Left cardiac atrium (tissue), 4 donors: ENCODE measurements at regions of chr4 and their contacts with region 1.

Region 1: GRCh38 chr4:148441986-148442831 is at the start of gene NR3C2:
- DNase-seq: peak; percentile 99
- ATAC-seq: peak; percentile 91 to 94
- total RNA-seq, gene NR3C2: 18.4 to 23.8 TPM

Region 2: DNA sequence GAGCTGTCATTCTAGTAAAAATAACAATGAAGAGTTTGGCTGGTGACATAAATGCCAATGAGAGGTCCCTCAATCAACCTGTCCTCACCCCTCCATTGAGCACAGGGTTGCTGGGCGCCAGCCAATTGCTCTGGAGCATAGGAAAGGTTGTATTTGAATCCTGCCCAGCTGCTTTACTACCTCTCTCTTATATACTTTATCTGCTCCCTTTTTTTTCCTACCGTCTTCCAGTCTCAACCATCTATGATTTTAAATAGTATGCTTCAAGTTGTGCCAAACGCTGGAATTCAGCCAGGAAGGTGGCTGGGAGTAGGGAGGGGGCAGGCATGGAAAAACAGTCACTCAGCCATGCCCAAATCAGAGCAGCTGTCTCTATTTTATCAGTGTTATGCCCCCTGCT is 153.8 kb before region 1 on chr4:
- intact Hi-C with region 1: loop called in 1 of 2 experiments (anchors 10 kb)
- DNase-seq: peak; percentile 26
- ATAC-seq: peak; percentile 42 to 44

Region 3: DNA sequence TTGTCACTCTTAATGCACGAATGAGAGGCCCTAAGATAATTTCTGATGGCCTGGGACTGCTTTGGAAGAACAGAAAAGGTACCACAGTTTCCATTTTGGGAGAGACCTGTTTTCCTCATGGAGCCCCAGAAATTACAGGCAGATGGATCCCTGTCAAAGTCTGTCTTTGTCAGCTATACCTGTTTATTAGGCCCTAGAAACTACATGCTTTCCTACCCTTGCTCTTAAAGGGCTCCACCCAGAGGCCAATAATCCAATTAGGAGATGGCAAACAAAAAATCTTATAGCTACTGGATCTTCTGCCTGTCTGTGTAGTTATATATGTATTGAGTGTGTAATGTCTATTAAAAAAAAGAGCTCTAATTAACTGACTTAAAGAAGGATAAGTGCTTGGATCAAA is 141.3 kb before region 1 on chr4:
- intact Hi-C with region 1: no loop called
- DNase-seq: no peak
- ATAC-seq: no peak

Region 4: GRCh38 chr4:148315049-148315448 is 127.2 kb before region 1 on chr4:
- intact Hi-C with region 1: no loop called
- DNase-seq: no peak
- ATAC-seq: peak in 1 of 2 donors; percentile 47

Region 5: DNA sequence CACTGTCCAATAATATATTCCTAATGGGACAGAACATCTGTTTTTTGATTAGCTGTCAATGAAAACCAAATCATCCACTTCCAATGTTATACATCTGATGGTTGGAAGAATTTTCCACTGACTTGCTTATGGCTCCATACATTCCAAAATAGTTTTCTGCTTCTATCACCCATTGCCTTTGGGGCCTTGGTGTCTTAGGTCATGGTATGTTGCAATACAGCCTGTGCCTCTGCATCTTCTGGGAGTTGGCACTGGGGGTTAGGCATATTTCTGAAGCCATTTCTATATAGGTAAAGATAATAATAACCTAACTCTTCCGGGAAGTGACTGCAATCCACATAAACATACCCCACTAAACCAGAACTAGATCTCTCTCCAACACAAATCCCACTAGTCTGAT is 53.3 kb after region 1 on chr4:
- intact Hi-C with region 1: no loop called
- DNase-seq: no peak
- ATAC-seq: no peak